H1 (cell line): ENCODE measurements at regions of chr2 and their contacts with region 1.

Region 1: GRCh38 chr2:114550895-114551793 is 108.7 kb downstream of the DPP10 start:
- DNase-seq: peak; percentile 41 to 66
- H3K4me3 ChIP-seq: no peak overlapping the region
- H3K27ac ChIP-seq: no peak overlapping the region
- H3K4me1 ChIP-seq: peaks cover 0 to 3% (median 1%) of the 10 kb centered on the region in 4 experiments; a peak in 2 of 7 replicates
- H3K27me3 ChIP-seq: no peaks in the 10 kb centered on the region
- CTCF ChIP-seq: peak; percentile 56 to 88 (median 75)
- EP300 ChIP-seq: no peak
- POLR2A ChIP-seq: no peak
- RAD21 ChIP-seq: peak; percentile 94

Region 2: DNA sequence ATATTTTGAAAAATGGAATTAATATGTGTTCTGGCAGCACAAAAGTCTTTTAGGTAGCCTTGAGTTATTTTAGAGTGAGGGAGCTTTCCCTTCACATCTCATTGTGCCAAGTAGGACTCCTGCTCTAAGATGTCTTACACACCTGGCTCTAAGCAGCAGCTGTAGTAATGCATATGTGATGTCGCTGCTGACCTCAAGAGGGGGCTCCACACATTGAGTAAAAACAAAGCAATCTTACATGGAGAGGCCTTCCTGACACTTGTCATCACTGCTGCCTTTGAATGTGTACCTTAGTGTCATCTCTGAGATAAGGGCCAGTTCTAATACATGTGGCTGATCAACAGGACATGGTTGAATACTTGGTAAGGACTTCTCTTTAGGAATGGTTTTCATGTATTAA is 585.5 kb before region 1 on chr2:
- CTCF ChIA-PET with region 1: interaction called, 18 read pairs
- POLR2A ChIA-PET with region 1: no interaction called
- DNase-seq: peak in 1 of 2 experiments; percentile 48
- H3K4me3 ChIP-seq: no peak overlapping the region
- H3K27ac ChIP-seq: no peak overlapping the region
- H3K4me1 ChIP-seq: no peaks in the 10 kb centered on the region
- H3K27me3 ChIP-seq: peaks cover 0 to 1% (median 0%) of the 10 kb centered on the region in 4 experiments; a peak in 1 of 7 replicates
- CTCF ChIP-seq: peak; percentile 18 to 79 (median 64)
- EP300 ChIP-seq: no peak
- POLR2A ChIP-seq: no peak
- RAD21 ChIP-seq: peak; percentile 67 to 80

Region 3: DNA sequence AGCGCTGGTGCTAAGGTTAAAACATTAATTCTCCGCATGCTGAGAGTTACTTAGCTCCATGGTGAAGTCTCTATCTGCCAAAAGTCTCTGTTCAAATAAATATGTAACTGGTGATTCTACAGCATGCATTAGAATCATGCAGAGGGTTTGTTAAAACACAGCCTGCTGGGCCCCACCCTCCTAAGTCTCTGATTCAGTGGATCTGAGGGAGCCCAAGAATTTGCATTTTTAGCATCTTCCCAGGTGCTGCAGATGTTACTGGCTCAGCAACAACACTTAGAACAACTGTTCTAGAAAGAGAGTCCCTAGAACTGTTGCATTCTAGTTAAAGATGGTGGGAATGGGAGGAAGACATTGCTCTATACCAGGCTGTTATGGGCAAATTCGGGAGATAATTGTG is 35.3 kb before region 1 on chr2:
- CTCF ChIA-PET with region 1: no interaction called
- POLR2A ChIA-PET with region 1: no interaction called
- DNase-seq: no peak
- H3K4me3 ChIP-seq: no peak overlapping the region
- H3K27ac ChIP-seq: no peak overlapping the region
- H3K4me1 ChIP-seq: peaks cover 0 to 3% (median 2%) of the 10 kb centered on the region in 4 experiments; a peak in 2 of 7 replicates
- H3K27me3 ChIP-seq: no peaks in the 10 kb centered on the region
- CTCF ChIP-seq: no peak
- EP300 ChIP-seq: no peak
- POLR2A ChIP-seq: no peak
- RAD21 ChIP-seq: no peak

Region 4: GRCh38 chr2:114735126-114735525 is 184.0 kb after region 1 on chr2:
- CTCF ChIA-PET with region 1: no interaction called
- POLR2A ChIA-PET with region 1: no interaction called
- DNase-seq: no peak
- H3K4me3 ChIP-seq: no peak overlapping the region
- H3K27ac ChIP-seq: no peak overlapping the region
- H3K4me1 ChIP-seq: no peaks in the 10 kb centered on the region
- H3K27me3 ChIP-seq: no peaks in the 10 kb centered on the region
- CTCF ChIP-seq: no peak
- EP300 ChIP-seq: no peak
- POLR2A ChIP-seq: no peak
- RAD21 ChIP-seq: no peak

Region 5: DNA sequence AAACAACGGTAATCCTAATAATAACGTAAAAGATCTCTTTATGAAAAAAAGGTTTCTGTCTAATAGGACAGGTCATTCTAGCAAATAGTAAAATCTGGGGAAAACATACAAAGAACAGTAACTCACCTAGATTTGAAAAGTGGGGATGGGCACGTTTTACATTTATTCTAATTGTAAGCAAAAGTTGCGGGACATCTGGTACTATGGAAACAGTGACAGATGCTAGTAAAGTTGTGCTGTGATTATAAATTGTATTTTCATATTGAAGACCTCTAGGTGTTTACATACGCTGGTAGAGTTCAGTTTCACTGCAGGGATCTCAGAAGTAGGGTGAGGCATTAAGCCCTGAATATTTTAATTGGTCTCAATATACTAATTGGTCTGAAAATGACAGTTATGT is 313.8 kb after region 1 on chr2:
- CTCF ChIA-PET with region 1: no interaction called
- POLR2A ChIA-PET with region 1: no interaction called
- DNase-seq: no peak
- H3K4me3 ChIP-seq: no peak overlapping the region
- H3K27ac ChIP-seq: no peak overlapping the region
- H3K4me1 ChIP-seq: no peaks in the 10 kb centered on the region
- H3K27me3 ChIP-seq: no peaks in the 10 kb centered on the region
- CTCF ChIP-seq: no peak
- EP300 ChIP-seq: no peak
- POLR2A ChIP-seq: no peak
- RAD21 ChIP-seq: no peak

Region 6: DNA sequence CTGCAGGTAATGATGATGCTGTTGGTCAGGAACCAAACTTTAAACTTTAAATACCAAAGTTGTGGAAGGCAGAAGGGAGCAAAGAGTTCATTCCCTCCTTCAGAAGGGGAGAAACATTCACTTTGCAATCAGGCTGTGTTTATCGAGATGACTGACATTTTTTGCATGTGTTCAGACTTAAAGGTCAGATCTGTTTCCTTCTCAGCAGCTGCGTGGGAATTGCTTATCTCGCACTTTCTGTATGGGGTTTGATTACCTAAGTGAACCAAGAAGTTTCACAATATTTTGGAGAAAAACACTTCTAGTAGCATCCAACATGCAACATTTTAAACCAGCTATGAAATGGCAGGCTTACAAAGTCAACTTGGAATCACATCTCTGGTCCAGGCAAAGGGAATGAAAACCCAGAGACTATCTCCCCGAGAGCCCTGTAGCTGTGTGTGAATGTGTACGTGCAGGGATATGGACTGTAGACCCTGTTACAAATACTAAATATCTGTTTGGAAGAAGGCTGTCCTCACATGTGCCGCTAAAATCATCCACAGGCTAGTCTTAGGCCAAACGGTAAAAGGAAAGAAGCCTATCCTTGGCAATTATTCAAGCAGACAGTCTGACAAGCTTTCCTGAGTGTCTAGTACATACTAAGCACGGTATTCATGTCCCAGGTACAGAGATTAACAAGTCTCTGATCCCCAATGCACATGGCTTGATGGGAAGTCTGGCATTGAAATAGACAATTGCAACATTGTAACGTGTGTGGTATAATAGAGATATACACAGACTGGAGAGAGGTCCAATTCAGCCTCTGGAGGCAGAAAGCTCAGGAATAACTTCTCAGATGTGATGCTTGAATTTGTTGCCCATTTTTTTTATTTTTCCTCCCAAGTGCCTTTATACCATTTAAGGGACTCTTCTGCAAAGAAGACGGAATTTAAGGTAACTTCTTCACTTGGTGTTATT is 374.4 kb after region 1 on chr2:
- CTCF ChIA-PET with region 1: no interaction called
- POLR2A ChIA-PET with region 1: no interaction called
- DNase-seq: no peak
- H3K4me3 ChIP-seq: no peak overlapping the region
- H3K27ac ChIP-seq: no peak overlapping the region
- H3K4me1 ChIP-seq: no peaks in the 10 kb centered on the region
- H3K27me3 ChIP-seq: no peaks in the 10 kb centered on the region
- CTCF ChIP-seq: no peak
- EP300 ChIP-seq: no peak
- POLR2A ChIP-seq: no peak
- RAD21 ChIP-seq: no peak